AG04449 (cell line): ENCODE measurements at regions of chr12 and their contacts with region 1.

Region 1: GRCh38 chr12:7018350-7019042 is at the start of gene LPCAT3:
- DNase-seq: peak; percentile 50
- H3K4me3 ChIP-seq: peak within 1 kb of the TSS; percentile 89
- CTCF ChIP-seq: peak; percentile 90

Region 2: DNA sequence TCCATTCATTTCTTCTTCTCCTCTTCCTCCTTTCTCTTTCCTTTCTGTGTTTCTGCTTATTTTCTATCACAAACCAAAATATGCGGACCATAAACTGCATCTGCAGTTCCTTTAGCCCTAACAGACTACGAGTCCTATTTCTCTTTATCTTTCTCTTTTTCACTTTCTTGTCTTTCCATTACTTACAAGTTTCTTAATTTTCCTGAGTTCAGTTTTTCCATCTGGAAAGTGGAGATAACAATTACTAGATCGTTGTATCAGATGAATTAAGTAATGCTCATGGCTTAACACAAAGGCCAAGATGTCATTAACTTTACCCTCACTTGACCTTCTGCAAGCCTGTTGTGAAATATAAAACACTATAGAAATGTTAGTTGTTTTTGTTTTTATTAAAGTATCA is 295.6 kb before region 1 on chr12:
- CTCF ChIA-PET with region 1: no interaction called
- POLR2A ChIA-PET with region 1: no interaction called
- DNase-seq: no peak
- H3K4me3 ChIP-seq: no peak overlapping the region
- CTCF ChIP-seq: no peak

Region 3: DNA sequence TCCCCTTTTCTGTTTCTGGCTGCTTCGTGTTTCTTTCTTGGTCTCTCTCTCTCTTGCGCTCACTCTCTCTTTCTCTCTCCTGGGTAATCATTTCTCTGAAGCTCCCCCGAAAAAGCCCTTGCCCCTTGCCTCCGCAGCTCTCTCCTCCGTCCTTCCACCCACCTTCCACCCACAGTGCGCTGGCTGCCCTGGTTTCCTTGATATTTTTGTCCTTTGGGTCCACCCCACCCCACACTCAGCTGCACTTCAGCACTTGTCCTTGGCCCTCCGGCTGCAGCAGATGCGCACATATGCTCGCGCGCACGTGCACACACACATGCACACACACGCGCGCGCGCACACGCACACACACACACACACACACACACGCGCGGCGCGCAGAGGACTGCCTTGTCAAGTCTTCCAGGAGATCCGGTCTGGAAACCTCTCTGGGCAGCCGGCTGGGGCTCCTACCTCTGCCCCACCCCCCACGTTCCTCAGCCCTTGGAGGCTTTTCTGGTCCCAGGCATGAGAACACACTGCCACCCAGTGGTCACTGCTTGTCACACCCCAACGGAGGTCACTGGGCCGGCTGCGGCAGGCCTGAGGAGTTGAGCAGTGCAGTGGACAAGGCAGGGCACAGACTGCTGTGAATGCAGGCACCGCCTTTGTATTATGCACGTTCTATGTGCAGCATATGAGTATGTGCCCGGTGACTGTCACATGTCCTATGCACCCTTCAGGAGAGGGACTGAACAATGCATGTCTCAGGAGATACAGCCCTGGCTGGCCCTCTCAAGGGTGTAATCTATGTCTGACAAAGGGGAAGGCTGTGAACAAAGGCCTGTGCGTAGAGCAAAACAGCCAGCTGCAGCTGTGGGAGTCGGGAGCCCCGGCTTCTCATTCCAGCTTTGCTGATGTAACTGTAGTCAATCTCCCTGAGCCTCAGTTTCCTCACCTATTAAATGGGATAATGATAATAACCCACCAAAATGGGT is 239.6 kb before region 1 on chr12:
- CTCF ChIA-PET with region 1: no interaction called
- POLR2A ChIA-PET with region 1: no interaction called
- DNase-seq: peak; percentile 53
- H3K4me3 ChIP-seq: peak overlapping the region; percentile 54
- CTCF ChIP-seq: peak; percentile 98

Region 4: GRCh38 chr12:7005311-7005710 is 13.2 kb before region 1 on chr12:
- CTCF ChIA-PET with region 1: interaction called, 20 read pairs
- POLR2A ChIA-PET with region 1: interaction called, 3 read pairs
- DNase-seq: no peak
- H3K4me3 ChIP-seq: no peak overlapping the region
- CTCF ChIP-seq: no peak

Region 5: GRCh38 chr12:7068240-7068993 is 49.9 kb after region 1 on chr12:
- CTCF ChIA-PET with region 1: no interaction called
- POLR2A ChIA-PET with region 1: no interaction called
- DNase-seq: no peak
- H3K4me3 ChIP-seq: no peak overlapping the region
- CTCF ChIP-seq: no peak

Region 6: DNA sequence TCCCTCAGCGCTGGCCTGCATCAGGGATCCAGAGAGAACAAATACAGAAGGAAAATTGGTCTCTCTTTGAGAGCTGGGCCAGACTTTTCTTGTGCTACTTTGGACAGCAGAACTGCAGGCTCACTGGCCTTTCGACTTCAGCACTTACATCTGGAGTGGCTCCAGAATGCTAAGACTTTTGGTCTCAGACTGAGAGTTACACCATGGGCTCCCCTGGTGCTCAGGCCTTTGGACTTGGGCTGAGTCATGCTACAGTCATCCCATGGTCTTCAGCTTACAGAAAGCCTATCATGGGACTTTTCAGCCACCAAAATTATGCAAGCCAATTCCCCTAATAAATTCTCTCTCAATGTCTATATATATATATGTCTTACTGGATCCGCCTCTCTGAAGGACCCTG is 494.1 kb after region 1 on chr12:
- CTCF ChIA-PET with region 1: no interaction called
- POLR2A ChIA-PET with region 1: no interaction called
- DNase-seq: peak; percentile 84
- H3K4me3 ChIP-seq: no peak overlapping the region
- CTCF ChIP-seq: no peak